Activated T-helper 1 cell treated with anti-CD3 and anti-CD28 coated beads, Interleukin-12 subunit alpha, Interleukin-12 subunit beta, Interleukin-2, Interleukin-4 antibody, amounts not matched to agents 30 ng/mL and 10 ng/mL and 1 ng/mL, durations not matched to agents 14 hours and 24 hours and 36 hours (primary cell): ENCODE measurements at regions of chr11 and their contacts with region 1.

Region 1: GRCh38 chr11:60913793-60914632 is at the start of gene TMEM109:
- DNase-seq: peak; percentile 83
- H3K4me3 Mint-ChIP-seq: peak within 1 kb of the TSS; percentile 96
- H3K27ac Mint-ChIP-seq: peak within 1 kb of the TSS; percentile 98
- H3K4me1 Mint-ChIP-seq: peaks cover 62% of the 10 kb centered on the region
- H3K27me3 Mint-ChIP-seq: peaks cover 12% of the 10 kb centered on the region
- total RNA-seq, gene TMEM109: 138 and 143 TPM in 2 replicates

Region 2: DNA sequence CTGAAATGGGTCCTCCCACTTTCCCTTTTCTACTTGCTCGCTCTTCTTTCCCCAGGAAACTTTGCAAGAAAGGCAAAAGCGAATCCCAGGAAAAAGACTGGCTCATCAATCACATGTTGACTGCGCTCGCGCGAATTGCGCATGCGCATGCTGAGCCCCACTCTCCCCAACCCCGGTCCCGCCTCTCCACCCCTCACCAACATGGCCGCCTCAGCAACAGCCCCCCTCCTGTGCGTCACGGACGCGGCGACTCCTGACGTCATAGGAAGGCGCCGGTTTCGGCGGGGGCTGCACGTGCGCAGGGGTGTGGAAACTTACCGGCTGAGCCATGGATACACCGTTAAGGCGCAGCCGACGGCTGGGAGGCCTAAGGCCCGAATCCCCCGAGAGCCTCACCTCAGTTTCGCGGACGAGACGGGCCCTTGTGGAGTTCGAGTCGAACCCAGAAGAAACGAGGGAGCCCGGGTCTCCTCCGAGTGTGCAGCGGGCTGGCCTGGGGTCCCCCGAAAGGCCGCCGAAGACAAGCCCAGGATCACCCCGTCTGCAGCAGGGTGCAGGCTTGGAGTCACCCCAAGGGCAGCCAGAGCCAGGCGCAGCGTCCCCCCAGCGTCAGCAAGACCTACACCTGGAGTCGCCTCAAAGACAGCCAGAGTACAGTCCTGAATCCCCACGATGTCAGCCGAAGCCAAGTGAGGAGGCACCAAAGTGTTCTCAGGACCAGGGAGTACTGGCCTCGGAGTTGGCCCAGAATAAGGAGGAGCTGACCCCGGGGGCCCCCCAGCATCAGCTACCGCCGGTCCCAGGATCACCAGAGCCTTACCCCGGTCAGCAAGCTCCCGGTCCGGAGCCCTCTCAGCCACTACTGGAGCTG is 72.0 kb before region 1 on chr11 and contains the start of gene CCDC86:
- intact Hi-C with region 1: loop called (anchors 1 kb)
- DNase-seq: peak; percentile 98
- H3K4me3 Mint-ChIP-seq: peak within 1 kb of the TSS; percentile 91
- H3K27ac Mint-ChIP-seq: peak within 1 kb of the TSS; percentile 83
- H3K4me1 Mint-ChIP-seq: peaks cover 46% of the 10 kb centered on the region
- H3K27me3 Mint-ChIP-seq: peaks cover 1% of the 10 kb centered on the region
- total RNA-seq, gene CCDC86: 88.2 and 92.2 TPM in 2 replicates

Region 3: GRCh38 chr11:60887556-60887955 is 26.5 kb before region 1 on chr11:
- intact Hi-C with region 1: no loop called
- DNase-seq: no peak
- H3K4me3 Mint-ChIP-seq: no peak overlapping the region
- H3K27ac Mint-ChIP-seq: no peak overlapping the region
- H3K4me1 Mint-ChIP-seq: peaks cover 12% of the 10 kb centered on the region
- H3K27me3 Mint-ChIP-seq: no peaks in the 10 kb centered on the region

Region 4: GRCh38 chr11:60951899-60952741 is 38.1 kb after region 1 on chr11 and contains the start of gene SLC15A3:
- intact Hi-C with region 1: loop called (anchors 2 kb)
- DNase-seq: no peak
- H3K4me3 Mint-ChIP-seq: peak within 1 kb of the TSS; percentile 78
- H3K27ac Mint-ChIP-seq: peak within 1 kb of the TSS; percentile 55
- H3K4me1 Mint-ChIP-seq: peaks cover 15% of the 10 kb centered on the region
- H3K27me3 Mint-ChIP-seq: peaks cover 31% of the 10 kb centered on the region
- total RNA-seq, gene SLC15A3: 1.7 and 2.0 TPM in 2 replicates

Region 5: GRCh38 chr11:60985991-60986915 is 72.2 kb after region 1 on chr11:
- intact Hi-C with region 1: loop called (anchors 1 kb)
- DNase-seq: peak; percentile 81
- H3K4me3 Mint-ChIP-seq: peak overlapping the region; percentile 80
- H3K27ac Mint-ChIP-seq: peak overlapping the region; percentile 92
- H3K4me1 Mint-ChIP-seq: peaks cover 94% of the 10 kb centered on the region
- H3K27me3 Mint-ChIP-seq: no peaks in the 10 kb centered on the region

Region 6: GRCh38 chr11:61111786-61112517 is 197.9 kb after region 1 on chr11:
- intact Hi-C with region 1: loop called (anchors 5 kb)
- DNase-seq: peak; percentile 70
- H3K4me3 Mint-ChIP-seq: peak overlapping the region; percentile 84
- H3K27ac Mint-ChIP-seq: peak overlapping the region; percentile 89
- H3K4me1 Mint-ChIP-seq: peaks cover 99% of the 10 kb centered on the region
- H3K27me3 Mint-ChIP-seq: no peaks in the 10 kb centered on the region

Region 7: GRCh38 chr11:61161190-61162091 is 247.4 kb after region 1 on chr11 and contains the start of gene VPS37C:
- intact Hi-C with region 1: loop called (anchors 1 kb)
- DNase-seq: peak; percentile 89
- H3K4me3 Mint-ChIP-seq: peak within 1 kb of the TSS; percentile 89
- H3K27ac Mint-ChIP-seq: peak within 1 kb of the TSS; percentile 91
- H3K4me1 Mint-ChIP-seq: peaks cover 60% of the 10 kb centered on the region
- H3K27me3 Mint-ChIP-seq: no peaks in the 10 kb centered on the region
- total RNA-seq, gene VPS37C: 11.5 and 11.6 TPM in 2 replicates

Region 8: DNA sequence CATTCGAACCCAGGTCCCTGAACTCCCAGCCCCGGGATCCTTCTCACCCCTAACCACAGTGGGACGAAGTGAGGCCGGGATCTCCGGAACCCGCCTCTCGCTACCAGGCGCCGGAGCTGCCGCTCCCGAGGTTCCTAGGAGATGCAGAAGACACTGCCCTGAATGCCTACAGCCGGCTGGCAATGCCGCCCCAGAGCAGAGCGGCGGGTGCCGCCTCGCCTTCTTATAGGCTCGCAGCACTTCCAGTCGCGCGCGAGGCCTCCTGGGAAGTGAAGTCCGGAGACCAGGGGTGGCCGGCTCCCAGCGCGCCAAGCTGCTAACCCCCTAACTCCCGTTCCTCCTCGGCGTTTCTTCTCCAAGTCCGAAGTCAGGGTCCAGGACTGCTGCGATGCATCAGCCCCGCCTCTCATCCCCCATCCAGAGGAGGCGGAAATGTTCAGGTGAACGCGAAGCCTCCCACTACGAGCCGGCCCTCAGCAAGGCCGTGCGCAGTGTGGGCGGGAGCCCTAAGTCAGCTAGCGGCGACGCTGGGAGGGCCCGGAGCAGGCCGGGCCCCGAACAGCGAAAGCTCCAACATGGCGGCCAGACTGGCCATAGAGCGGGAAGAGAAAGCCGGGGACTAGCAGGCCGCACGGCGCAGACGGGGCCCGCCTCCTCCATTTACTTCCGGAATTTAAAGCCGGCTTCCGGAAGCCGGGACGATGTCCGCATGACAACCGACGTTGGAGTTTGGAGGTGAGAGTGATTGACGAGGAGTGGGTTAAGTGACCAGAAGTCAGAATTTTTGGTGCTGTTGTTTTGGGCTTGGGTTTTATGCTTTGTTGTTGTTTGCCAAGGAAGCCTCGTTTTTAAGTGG is 447.9 kb after region 1 on chr11 and contains the starts of genes CYB561A3 and TMEM138:
- intact Hi-C with region 1: loop called (anchors 1 kb)
- DNase-seq: peak; percentile 90
- H3K4me3 Mint-ChIP-seq: peak within 1 kb of the TSS; percentile 98
- H3K27ac Mint-ChIP-seq: peak within 1 kb of the TSS; percentile 95
- H3K4me1 Mint-ChIP-seq: peaks cover 45% of the 10 kb centered on the region
- H3K27me3 Mint-ChIP-seq: no peaks in the 10 kb centered on the region
- total RNA-seq, gene CYB561A3: 38.1 and 42.3 TPM in 2 replicates
- total RNA-seq, gene TMEM138: 68.4 and 71.7 TPM in 2 replicates